ENCODE measurements at regions of chr7 and their contacts with region 1.

Region 1: DNA sequence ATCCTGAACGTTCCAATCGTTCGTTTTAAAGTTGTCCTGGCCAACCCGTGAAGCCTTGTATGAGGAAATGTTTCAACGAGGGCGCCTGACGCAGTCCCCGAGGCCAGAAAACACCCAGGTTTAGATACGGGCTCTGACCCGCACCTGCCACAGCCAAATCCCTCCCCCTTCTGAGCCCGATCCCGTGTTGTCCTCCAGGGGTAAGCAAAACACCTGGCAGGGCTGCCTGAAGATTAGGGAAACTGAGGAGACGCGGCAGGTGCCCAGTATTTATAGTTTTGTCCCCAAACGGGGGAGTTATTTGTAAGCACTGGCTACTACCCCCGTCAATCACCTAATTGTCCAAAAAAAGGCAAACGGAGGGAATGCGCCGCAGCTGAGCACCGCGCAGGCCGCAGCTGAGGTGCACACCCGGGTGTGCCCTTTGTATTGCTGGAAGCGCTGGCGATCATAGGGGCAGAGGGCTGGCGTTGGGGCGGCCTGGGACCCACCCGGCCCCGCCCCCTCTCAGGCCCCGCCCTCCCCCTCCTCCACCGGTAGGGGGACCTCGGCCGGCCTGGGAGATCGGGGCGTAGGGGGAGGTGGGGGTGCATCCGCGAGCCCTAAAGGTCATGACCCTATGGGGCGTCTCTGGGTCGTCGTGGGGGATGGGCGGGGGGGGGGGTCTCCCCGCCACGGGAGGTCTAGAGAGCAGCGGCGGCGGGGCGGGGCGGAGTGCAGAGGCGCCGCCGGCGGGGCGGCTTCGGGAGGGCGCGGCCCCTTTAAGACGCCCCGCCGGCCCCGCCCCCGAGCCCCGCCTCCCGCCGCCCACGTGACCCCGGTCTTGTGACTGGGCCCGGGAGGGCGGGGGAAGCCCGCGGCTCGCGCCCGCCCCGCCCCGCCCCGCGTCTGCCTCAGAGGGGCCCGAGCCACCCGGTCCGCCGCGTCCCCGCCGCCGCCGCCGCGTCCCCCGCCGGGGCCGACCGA is at the start of gene BRI3:
- DNase-seq: peak; percentile 55 to 96
- H3K4me3 ChIP-seq: peak within 1 kb of the TSS; percentile 93 to 100
- H3K27ac ChIP-seq: peak within 1 kb of the TSS; percentile 99
- H3K4me1 ChIP-seq: peaks cover 25 to 33% of the 10 kb centered on the region in 2 donors
- H3K27me3 ChIP-seq: no peaks in the 10 kb centered on the region
- CTCF ChIP-seq: no peak
- total RNA-seq, gene BRI3: 61.6 TPM

Region 2: GRCh38 chr7:98186452-98187137 is 94.5 kb before region 1 on chr7:
- intact Hi-C with region 1: loop called (anchors 2 kb)
- DNase-seq: no peak
- H3K4me3 ChIP-seq: peak overlapping the region; percentile 20 to 29
- H3K27ac ChIP-seq: peak overlapping the region; percentile 85 to 92
- H3K4me1 ChIP-seq: peaks cover 0 to 11% of the 10 kb centered on the region in 2 donors
- H3K27me3 ChIP-seq: no peaks in the 10 kb centered on the region
- CTCF ChIP-seq: no peak

Region 3: GRCh38 chr7:98617051-98617959 is 336.2 kb after region 1 on chr7 and contains the start of gene NPTX2:
- intact Hi-C with region 1: loop called (anchors 5 kb)
- DNase-seq: peak in 1 of 2 donors; percentile 85
- H3K4me3 ChIP-seq: peak within 1 kb of the TSS; percentile 60 to 76
- H3K27ac ChIP-seq: peak within 1 kb of the TSS; percentile 46 to 57
- H3K4me1 ChIP-seq: peaks cover 4 to 11% of the 10 kb centered on the region in 2 donors
- H3K27me3 ChIP-seq: no peaks in the 10 kb centered on the region
- CTCF ChIP-seq: peak; percentile 18 to 50 (median 30)
- total RNA-seq, gene NPTX2: 44.2 TPM

Region 4: GRCh38 chr7:98878365-98879165 is 597.5 kb after region 1 on chr7 and contains the start of gene TRRAP:
- intact Hi-C with region 1: loop called (anchors 5 kb)
- DNase-seq: peak in 1 of 2 donors; percentile 82
- H3K4me3 ChIP-seq: peak within 1 kb of the TSS; percentile 85 to 93
- H3K27ac ChIP-seq: peak within 1 kb of the TSS; percentile 92 to 93
- H3K4me1 ChIP-seq: peaks cover 2 to 12% of the 10 kb centered on the region in 2 donors
- H3K27me3 ChIP-seq: no peaks in the 10 kb centered on the region
- CTCF ChIP-seq: peak; percentile 90 to 100 (median 99)
- total RNA-seq, gene TRRAP: 23.4 TPM